ENCODE measurements at regions of chr16 and their contacts with region 1.

Region 1: DNA sequence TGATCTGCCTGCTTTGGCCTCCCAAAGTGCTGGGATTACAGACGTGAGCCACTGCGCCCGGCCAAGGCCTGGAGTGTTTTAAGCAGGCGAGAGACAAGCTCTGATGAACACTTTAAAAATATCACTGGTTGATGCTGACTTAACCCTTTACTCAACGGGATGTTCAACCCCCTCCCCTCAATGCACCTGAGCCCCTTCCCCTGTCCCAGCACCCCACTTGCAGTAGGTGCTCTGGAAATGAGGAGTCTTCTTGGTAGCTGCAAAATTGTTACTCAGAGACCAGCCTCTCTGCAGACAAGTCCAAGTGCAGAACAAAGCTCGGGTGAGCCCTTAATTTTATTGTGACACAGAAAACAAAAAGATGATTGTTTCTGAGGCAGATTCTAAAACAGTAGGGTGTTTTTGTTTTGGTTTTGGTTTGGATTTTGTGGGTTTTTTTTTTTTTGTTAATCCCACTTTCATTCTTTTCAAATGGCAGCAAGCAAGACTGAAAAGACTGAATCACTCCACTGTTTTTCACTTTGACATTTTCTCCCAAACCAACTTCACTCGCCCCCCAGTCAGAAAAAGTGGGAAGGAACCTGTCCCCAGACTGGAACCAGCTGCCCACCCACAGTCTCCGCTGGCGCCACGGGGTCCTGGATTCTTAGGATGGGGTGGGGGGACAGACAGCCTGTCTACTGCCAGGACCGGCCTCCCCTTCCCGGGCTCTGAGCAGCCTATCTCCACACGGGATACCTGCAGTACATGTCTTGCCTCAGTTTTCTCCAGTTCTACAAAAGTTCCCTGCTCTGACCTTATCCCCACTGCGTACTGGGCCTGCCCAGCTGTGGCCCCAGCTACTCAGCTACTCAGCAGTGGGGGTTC is 5.2 kb upstream of the PLLP start:
- DNase-seq: no peak
- ATAC-seq: no peak
- H3K4me3 Mint-ChIP-seq: no peak overlapping the region
- H3K27ac Mint-ChIP-seq: no peak overlapping the region
- H3K4me1 Mint-ChIP-seq: peaks cover 13% of the 10 kb centered on the region
- H3K27me3 Mint-ChIP-seq: peaks cover 3% of the 10 kb centered on the region
- CTCF ChIP-seq: no peak

Region 2: GRCh38 chr16:57300387-57301125 is 10.9 kb after region 1 on chr16:
- CTCF ChIA-PET with region 1: interaction called, 12 read pairs
- POLR2A ChIA-PET with region 1: interaction called, 3 read pairs
- intact Hi-C with region 1: no loop called
- DNase-seq: peak; percentile 99
- ATAC-seq: peak; percentile 91
- H3K4me3 Mint-ChIP-seq: no peak overlapping the region
- H3K27ac Mint-ChIP-seq: no peak overlapping the region
- H3K4me1 Mint-ChIP-seq: peaks cover 14% of the 10 kb centered on the region
- H3K27me3 Mint-ChIP-seq: no peaks in the 10 kb centered on the region
- CTCF ChIP-seq: peak; percentile 96

Region 3: GRCh38 chr16:57341441-57342303 is 52.0 kb after region 1 on chr16:
- CTCF ChIA-PET with region 1: no interaction called
- POLR2A ChIA-PET with region 1: no interaction called
- intact Hi-C with region 1: no loop called
- DNase-seq: no peak
- ATAC-seq: no peak
- H3K4me3 Mint-ChIP-seq: no peak overlapping the region
- H3K27ac Mint-ChIP-seq: no peak overlapping the region
- H3K4me1 Mint-ChIP-seq: peaks cover 17% of the 10 kb centered on the region
- H3K27me3 Mint-ChIP-seq: peaks cover 19% of the 10 kb centered on the region
- CTCF ChIP-seq: no peak

Measured in activated CD8-positive, alpha-beta T cell treated with anti-CD3 and anti-CD28 coated beads for 36 hours (primary cell).